ENCODE measurements at regions of chr7 and their contacts with region 1.

Region 1: GRCh38 chr7:77696198-77697028 is at the start of gene RSBN1L:
- DNase-seq: peak; percentile 100
- total RNA-seq, gene RSBN1L: 9.4 TPM

Region 2: DNA sequence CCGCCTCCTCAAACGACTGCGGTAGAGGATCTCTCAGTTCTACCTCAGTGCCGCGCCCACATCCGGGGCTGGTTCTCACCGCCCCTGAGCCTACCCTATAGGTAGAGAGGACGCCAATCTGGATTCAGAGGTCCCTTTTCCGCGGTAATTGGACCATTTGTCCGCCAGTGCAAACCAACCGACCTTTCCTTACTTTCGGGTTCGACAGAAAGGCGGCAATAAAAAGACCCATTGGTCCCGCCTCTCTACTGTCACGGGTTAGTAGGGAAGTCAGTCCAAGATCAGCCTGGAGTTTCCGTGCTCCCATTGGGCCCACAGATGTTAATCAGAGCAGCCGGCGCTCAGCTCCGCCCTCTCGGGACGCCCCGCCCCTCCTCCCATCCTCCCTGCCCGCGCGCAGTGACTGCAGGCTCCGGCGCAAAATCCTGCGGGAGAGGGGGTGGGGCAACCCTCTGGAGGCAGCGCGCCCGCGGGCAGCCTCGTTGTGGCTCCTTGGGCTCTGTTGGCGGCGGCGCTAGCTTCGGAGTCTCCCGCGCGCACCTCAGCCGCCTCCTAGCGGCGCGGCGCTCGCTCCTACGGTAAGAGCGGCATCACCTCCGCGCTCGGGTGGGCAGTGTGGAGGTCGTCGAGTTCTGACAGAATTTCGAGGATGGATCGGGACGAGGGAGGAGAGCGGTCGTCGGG is 102.1 kb after region 1 on chr7 and contains the starts of genes PHTF2 and TMEM60:
- intact Hi-C with region 1: loop called (anchors 2 kb)
- DNase-seq: peak; percentile 99
- total RNA-seq, gene PHTF2: 12.5 TPM
- total RNA-seq, gene TMEM60: 6.4 TPM

Region 3: GRCh38 chr7:77866786-77867536 is 170.5 kb after region 1 on chr7:
- intact Hi-C with region 1: no loop called
- DNase-seq: no peak

Measured in cardiac septum (tissue), 1 donor.